Aorta (tissue), 5 donors: ENCODE measurements at regions of chr18 and their contacts with region 1.

Region 1: DNA sequence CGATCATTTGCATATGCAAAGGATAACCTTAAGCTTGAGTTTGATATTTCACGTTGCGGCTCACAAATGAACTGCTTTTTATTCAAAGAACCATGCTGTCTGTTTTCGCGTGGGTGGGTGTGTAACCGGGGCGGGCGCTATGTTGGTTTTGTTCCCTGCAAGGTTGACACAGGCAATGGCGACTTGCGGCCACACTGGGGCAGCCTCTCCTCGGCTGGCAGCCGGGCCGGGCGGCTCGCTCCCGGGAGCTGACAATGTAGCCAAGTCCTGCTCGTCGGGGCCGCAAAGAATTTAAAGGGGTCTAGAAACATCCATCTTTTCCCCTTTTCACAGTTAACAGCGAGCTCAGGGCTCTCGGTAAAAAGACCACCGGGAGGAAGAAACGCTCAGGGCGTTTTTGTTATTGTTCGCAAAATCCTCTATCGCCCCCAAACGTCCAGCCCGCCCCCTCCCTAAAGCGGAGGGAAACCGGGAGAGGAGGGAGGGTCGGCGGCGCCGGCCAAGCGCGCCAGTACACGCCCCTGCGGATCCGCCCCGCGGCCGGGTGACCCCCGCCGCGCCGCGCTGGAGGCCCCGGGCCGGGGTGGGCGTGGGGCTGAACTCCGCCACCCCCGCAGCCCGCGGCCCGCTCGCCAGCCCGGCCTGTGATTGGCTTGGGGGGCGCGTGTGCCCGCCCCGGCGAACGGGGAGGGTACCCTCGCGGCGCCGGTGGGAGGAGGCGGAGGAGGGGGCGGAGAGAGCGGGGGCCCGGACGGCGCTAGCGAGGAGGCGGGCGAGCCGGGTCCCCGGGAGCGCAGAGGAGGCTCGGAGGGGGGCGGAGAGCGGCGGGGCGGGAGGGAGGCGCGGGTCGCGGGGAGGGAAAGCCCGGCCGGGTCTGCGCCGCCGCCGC is at the start of gene NEDD4L:
- DNase-seq: peak; percentile 90 to 94
- ATAC-seq: peak; percentile 91
- H3K4me3 ChIP-seq: peak within 1 kb of the TSS; percentile 73 to 89
- H3K27ac ChIP-seq: peak within 1 kb of the TSS in 1 of 2 donors; percentile 29
- H3K4me1 ChIP-seq: peaks cover 0 to 2% of the 10 kb centered on the region in 2 donors
- H3K27me3 ChIP-seq: no peaks in the 10 kb centered on the region
- total RNA-seq, gene NEDD4L: 20.9 to 24.0 TPM

Region 2: DNA sequence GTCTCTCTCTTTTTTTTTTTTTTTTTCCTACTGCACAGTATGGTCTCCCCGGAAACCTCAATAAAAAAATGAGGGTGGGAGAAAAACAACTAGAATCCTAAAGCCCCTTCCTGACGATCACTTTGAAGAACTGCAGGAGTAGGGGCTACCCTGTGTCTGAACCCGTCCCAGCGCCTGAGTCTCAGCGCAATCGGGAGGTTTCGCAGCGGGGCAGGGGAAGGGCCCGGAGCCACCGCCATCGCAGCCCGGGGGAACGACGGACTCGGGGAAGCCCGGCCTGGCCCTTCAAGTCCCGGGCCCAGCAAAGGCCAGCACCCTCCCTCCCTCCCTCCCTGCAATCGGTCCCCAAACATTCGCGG is 422.5 kb before region 1 on chr18:
- intact Hi-C with region 1: loop called (anchors 10 kb)
- DNase-seq: no peak
- ATAC-seq: peak; percentile 38
- H3K4me3 ChIP-seq: peak overlapping the region; percentile 88 to 90
- H3K27ac ChIP-seq: peak overlapping the region in 1 of 2 donors; percentile 82
- H3K4me1 ChIP-seq: no peaks in the 10 kb centered on the region
- H3K27me3 ChIP-seq: no peaks in the 10 kb centered on the region

Region 3: DNA sequence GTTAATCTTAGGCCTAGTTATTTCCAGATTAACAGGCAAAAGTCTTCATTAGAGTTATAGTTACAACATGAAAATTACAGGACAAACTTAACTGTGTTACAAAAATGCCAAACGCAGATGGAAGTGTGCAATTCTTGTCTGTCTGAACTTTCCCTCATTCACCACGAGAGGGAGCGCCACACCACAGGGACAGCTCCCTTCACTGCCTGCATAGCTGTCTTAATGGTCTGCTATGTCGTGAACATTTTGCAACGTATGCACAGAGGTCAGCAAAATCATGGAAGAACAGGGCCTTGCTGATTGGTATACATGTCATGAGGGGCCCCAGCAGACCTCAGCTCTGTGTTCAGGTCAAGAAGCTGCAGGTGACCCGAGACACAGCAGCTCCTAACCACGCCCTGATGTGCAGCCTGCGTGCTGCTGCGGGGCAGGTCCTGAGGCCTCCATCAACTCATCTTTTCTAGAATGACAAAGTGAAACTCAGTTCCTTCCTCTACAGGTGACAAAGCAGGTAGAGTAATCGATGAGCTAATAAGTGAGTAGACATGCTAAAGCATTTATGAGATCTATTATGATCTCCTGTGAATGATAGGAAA is 161.8 kb before region 1 on chr18:
- intact Hi-C with region 1: loop called (anchors 5 to 10 kb)
- DNase-seq: peak; percentile 67 to 77
- ATAC-seq: peak; percentile 82
- H3K4me3 ChIP-seq: no peak overlapping the region
- H3K27ac ChIP-seq: no peak overlapping the region
- H3K4me1 ChIP-seq: no peaks in the 10 kb centered on the region
- H3K27me3 ChIP-seq: no peaks in the 10 kb centered on the region

Region 4: DNA sequence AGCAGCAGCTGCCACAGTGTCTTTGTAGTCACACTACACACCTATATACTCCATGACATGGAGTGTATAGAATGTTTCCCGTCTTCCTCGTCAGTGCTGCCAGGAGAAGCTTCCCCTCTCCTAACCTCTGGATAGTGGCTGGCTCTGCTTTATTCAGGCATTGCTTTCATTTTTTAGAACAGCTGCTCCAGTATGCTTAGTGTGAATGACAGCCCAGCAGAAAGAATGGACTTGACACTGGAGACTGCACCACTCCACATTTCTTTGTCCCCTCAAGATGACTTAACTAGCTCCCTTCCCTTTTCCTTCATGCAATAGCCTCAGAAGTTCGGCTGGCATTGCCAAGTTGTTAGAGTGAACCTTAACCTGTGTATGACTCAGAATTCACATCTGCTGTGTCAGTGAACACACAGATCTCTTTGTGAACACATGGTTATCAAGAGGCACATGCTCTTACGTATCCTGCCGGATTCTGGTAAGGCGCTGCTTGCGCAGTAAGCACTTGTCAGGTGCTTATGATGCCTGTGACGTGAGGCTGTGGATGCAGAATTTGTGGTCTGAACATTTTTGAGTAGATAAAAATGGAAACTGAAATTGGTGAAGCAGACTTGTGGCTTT is 74.2 kb after region 1 on chr18:
- intact Hi-C with region 1: loop called (anchors 2 kb)
- DNase-seq: no peak
- ATAC-seq: no peak
- H3K4me3 ChIP-seq: no peak overlapping the region
- H3K27ac ChIP-seq: no peak overlapping the region
- H3K4me1 ChIP-seq: no peaks in the 10 kb centered on the region
- H3K27me3 ChIP-seq: no peaks in the 10 kb centered on the region

Region 5: DNA sequence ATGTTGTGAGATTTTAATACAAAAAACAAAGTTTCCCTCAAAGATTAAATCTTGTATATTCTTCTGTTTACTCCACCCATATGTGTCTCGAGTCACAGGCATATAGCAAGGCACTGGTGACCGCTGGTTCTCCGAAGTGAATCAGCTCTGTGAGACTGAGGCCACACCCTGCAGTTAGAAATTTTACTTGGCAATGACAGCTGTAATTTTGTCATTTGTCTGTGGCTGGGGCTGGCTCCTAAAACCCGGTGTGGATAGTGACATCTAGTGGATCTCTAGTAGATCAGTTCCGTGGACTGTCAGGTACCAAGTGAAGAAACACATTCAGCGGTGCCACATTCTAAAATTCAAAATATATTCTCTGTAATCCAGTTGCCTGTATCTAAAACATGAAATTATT is 278.3 kb after region 1 on chr18:
- intact Hi-C with region 1: loop called in 1 of 2 experiments (anchors 10 kb)
- DNase-seq: peak in 1 of 2 donors; percentile 69
- ATAC-seq: peak; percentile 90
- H3K4me3 ChIP-seq: no peak overlapping the region
- H3K27ac ChIP-seq: no peak overlapping the region
- H3K4me1 ChIP-seq: no peaks in the 10 kb centered on the region
- H3K27me3 ChIP-seq: no peaks in the 10 kb centered on the region